A673 (cell line): ENCODE measurements at regions of chr12 and their contacts with region 1.

Region 1: DNA sequence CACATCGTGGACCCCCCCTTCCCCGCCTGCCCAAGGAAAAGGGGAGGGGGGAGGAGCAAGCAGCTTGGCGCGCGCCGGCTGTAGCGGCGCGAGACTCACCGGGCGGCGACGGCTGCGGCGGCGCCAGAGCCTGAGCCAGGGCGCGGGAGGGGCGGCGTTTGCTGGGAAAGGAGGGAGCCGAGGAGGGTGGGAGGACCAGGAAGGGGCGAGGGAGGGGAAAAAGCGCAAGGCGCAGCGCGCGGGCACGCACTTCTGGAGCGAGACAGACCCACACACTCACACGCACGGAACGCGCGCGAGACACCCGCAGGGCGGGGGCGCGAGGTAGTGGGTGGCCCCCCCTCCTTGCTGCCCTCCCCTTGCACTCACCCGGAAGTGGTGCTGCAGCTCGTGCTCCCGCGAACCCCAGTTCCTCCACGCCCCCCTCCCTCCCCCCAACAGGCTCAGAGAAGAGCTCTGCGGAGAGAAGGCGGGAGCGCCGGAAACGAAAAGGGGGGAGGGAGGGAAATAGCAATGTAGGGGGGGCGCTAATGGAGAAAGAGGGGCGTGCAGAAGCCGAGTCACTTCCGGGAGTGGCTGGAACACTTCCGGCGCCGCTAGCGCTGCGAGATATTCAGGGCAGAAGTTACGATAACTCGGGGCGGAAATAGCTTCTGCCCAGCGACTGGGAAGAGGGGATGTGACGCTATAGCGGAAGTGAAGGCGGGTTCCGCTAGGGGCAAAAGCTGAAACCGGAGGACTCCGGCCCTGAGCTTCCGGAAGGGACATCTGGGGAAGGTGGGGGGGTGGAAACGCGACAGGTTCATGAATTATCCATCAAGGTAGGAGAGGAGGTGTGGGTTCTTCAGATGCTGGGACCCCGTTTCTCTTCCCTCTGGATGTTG is at the start of gene ZNF384:
- DNase-seq: peak; percentile 99
- H3K4me3 ChIP-seq: peak within 1 kb of the TSS; percentile 86
- H3K27ac ChIP-seq: peak within 1 kb of the TSS; percentile 100
- H3K4me1 ChIP-seq: peaks cover 29% of the 10 kb centered on the region
- H3K27me3 ChIP-seq: no peaks in the 10 kb centered on the region
- CTCF ChIP-seq: no peak
- total RNA-seq, gene ZNF384: 88.8 and 92.5 TPM in 2 replicates

Region 2: GRCh38 chr12:6392504-6393077 is 296.6 kb before region 1 on chr12:
- CTCF ChIA-PET with region 1: no interaction called
- POLR2A ChIA-PET with region 1: no interaction called
- intact Hi-C with region 1: no loop called
- DNase-seq: no peak
- H3K4me3 ChIP-seq: no peak overlapping the region
- H3K27ac ChIP-seq: no peak overlapping the region
- H3K4me1 ChIP-seq: no peaks in the 10 kb centered on the region
- H3K27me3 ChIP-seq: no peaks in the 10 kb centered on the region
- CTCF ChIP-seq: no peak

Region 3: GRCh38 chr12:6540181-6540877 is 148.9 kb before region 1 on chr12:
- CTCF ChIA-PET with region 1: no interaction called
- POLR2A ChIA-PET with region 1: interaction called, 11 read pairs
- intact Hi-C with region 1: no loop called
- DNase-seq: peak; percentile 94
- H3K4me3 ChIP-seq: peak overlapping the region; percentile 34
- H3K27ac ChIP-seq: peak overlapping the region; percentile 50
- H3K4me1 ChIP-seq: peaks cover 39% of the 10 kb centered on the region
- H3K27me3 ChIP-seq: no peaks in the 10 kb centered on the region
- CTCF ChIP-seq: peak; percentile 35; the same call in 1 of the 2 replicates

Region 4: GRCh38 chr12:6613776-6614512 is 75.3 kb before region 1 on chr12:
- CTCF ChIA-PET with region 1: interaction called, 9 read pairs
- POLR2A ChIA-PET with region 1: interaction called, 4 read pairs
- intact Hi-C with region 1: loop called (anchors 2 kb)
- DNase-seq: peak; percentile 91
- H3K4me3 ChIP-seq: no peak overlapping the region
- H3K27ac ChIP-seq: peak overlapping the region; percentile 80
- H3K4me1 ChIP-seq: peaks cover 24% of the 10 kb centered on the region
- H3K27me3 ChIP-seq: no peaks in the 10 kb centered on the region
- CTCF ChIP-seq: 0 out of 2 replicates have a peak, but pooled peaks have one; percentile 10

Region 5: DNA sequence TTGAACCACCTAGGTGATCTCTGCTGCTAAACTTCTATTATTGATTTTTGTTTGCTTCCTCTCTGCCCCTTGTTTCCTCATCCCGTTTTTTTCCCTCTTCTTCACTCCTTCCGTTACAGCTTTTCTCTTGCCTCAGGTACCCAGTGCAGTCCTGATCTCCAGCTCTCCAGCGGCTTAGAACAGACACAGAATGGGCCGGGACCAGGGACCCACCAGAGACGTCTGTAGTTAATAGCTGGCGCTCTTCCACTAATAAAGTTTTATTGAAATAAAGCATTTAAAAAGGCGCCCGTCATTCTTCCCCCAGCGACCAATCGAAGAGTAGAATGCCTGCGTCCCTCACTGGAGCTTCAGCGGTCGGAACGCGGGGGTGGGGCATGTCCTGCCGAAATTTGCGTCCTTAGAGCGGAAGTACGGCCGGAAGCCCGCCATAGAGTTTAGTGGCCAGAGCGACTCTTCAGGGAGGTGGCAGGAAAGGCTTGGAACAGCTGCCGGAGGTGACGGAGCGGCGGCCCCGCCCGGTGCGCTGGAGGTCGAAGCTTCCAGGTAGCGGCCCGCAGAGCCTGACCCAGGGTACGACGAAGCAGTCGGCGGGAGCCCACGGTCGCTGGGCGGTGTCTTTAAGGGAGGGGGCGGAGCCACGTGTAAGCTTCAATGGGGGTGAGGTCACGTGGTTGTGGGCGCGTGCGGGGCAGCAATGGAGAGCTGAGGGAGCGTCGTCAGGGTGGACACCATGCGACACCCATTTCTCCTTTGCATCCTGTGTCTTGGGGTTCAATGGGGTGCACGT is 34.6 kb after region 1 on chr12 and contains the start of gene COPS7A:
- CTCF ChIA-PET with region 1: interaction called, 3 read pairs
- POLR2A ChIA-PET with region 1: interaction called, 20 read pairs
- intact Hi-C with region 1: loop called (anchors 2 kb)
- DNase-seq: peak; percentile 99
- H3K4me3 ChIP-seq: peak within 1 kb of the TSS; percentile 56
- H3K27ac ChIP-seq: peak within 1 kb of the TSS; percentile 87
- H3K4me1 ChIP-seq: peaks cover 10% of the 10 kb centered on the region
- H3K27me3 ChIP-seq: no peaks in the 10 kb centered on the region
- CTCF ChIP-seq: no peak
- total RNA-seq, gene COPS7A: 67.2 and 67.7 TPM in 2 replicates

Region 6: GRCh38 chr12:7108796-7109571 is 419.7 kb after region 1 on chr12 and contains the start of gene C1RL:
- CTCF ChIA-PET with region 1: no interaction called
- POLR2A ChIA-PET with region 1: interaction called, 10 read pairs
- intact Hi-C with region 1: no loop called
- DNase-seq: peak; percentile 82
- H3K4me3 ChIP-seq: peak within 1 kb of the TSS; percentile 42
- H3K27ac ChIP-seq: peak within 1 kb of the TSS; percentile 52
- H3K4me1 ChIP-seq: no peaks in the 10 kb centered on the region
- H3K27me3 ChIP-seq: no peaks in the 10 kb centered on the region
- CTCF ChIP-seq: peak; percentile 96
- total RNA-seq, gene C1RL: 2.4 and 4.0 TPM in 2 replicates